AG04450 (cell line): ENCODE measurements at regions of chr4 and their contacts with region 1.

Region 1: DNA sequence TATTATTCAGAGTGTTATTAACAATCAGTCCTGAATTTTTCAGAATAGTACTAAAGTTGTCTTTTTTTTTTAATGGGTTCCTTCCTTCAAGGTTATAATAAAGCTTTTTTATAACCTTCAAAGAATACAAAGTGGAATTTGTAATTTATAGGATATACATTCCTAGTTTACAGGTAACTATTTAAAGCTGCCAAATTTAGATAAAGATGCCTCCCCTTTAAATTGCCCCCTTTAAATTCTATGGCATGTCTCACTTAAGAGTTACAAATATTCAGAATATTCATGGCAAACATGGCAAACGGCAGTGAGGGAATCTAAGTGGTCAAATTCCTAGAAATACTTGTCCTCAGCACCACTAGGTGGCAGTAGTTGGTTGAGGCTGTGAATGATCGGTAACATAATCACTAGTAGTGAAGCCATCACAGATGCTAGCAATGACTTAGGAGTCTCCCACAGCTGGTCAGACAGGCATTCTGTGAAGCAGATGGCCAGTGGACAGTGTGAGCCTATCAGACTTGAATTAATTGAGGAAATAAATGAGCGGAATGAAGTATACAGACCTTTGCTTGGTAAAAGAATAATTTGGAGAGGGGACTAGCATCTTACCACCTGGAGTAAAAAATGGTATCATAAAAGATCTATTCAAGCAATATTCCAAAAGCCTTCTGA is 86.4 kb downstream of the CBR4 start:
- DNase-seq: peak; percentile 76
- H3K4me3 ChIP-seq: no peak overlapping the region
- H3K27ac ChIP-seq: no peak overlapping the region
- H3K27me3 ChIP-seq: no peaks in the 10 kb centered on the region
- CTCF ChIP-seq: peak; percentile 87

Region 2: DNA sequence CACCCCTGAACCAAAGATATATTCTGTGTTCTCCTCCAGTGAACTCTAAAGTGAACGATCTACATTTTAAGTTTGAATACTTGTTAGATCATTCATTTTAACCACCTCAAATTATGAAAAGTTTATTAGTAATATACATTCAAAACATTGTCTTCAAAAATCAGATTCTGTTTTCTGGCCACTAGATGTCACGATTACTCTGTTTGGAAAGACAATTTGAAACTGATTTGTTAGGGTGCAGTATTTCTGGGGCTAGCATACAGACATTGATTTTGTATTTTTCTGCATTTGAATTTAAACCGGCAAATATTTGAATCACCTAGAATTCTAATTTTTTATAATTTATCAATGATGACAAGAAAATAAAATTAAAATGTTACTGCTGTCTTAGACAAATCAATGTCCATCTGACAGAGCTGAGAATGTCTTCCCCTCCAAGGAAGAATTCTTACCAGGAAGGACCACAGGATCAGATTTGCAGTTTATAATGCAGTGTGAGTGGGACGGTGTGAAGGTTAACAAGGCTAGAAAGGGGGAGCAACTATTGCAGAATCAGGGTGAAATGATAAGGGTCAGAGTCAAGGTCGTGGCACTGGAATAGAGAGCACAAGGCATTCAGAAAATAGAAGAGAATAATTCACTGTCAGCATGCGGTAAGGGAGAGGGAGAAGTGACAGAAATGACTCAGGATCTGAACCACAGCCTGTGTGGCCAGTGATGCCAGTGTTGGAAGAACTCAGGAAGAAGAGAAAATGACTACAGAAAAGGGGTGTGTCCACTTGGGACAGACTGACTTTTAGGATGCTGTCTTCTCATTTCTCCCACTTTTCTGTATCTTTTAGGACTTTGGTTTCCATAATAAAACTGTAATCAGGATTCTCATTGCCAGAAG is 739.7 kb before region 1 on chr4:
- CTCF ChIA-PET with region 1: interaction called, 26 read pairs
- POLR2A ChIA-PET with region 1: no interaction called
- DNase-seq: no peak
- H3K4me3 ChIP-seq: no peak overlapping the region
- H3K27ac ChIP-seq: no peak overlapping the region
- H3K27me3 ChIP-seq: no peaks in the 10 kb centered on the region
- CTCF ChIP-seq: peak; percentile 71

Region 3: DNA sequence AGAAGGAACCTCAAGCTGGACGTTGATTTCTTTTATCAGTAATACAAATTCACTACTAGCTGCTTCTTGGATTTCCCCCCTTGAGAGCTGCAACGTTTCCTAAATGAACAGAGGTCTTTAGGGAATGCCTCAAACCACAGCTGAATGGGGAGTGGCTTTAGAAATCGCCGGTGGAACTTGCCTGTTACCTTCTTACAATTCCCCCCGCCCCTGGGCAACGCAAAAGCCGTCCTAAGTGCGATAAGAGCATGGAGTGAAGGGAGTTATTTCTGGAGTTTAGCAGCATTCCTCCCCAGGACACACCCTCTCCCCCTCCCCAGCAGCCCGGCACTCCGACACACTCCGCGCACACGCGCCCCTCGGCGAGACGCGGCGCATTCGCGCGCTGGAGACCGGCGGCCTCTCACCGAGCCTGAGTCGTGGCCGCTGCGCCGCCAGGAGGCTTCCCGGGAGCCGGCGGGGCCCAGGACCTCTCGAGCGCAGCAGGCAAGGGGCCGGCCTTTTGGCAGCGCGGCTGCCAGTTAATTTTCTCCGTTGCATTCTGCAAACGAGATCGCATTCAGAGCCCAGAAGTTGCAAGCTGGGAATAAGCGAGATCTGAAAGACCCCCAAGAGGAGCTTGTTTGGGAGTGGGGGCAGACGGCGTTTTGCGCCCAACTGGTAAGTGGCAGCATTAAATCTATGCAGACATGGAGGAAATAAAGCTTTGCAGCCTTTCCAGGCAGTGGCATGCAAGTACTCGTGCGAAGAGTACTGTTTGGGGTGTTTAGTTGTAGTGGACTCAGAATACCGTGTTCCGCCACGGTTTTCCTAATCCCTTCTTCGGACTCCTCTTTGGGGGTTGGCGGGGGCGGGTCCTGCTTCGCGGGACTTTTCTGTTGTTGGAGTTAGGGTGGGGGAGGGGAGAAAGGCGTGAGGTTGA is 292.2 kb before region 1 on chr4:
- CTCF ChIA-PET with region 1: interaction called, 11 read pairs
- POLR2A ChIA-PET with region 1: no interaction called
- DNase-seq: no peak
- H3K4me3 ChIP-seq: peak overlapping the region; percentile 78
- H3K27ac ChIP-seq: peak overlapping the region; percentile 61
- H3K27me3 ChIP-seq: no peaks in the 10 kb centered on the region
- CTCF ChIP-seq: peak; percentile 54

Region 4: DNA sequence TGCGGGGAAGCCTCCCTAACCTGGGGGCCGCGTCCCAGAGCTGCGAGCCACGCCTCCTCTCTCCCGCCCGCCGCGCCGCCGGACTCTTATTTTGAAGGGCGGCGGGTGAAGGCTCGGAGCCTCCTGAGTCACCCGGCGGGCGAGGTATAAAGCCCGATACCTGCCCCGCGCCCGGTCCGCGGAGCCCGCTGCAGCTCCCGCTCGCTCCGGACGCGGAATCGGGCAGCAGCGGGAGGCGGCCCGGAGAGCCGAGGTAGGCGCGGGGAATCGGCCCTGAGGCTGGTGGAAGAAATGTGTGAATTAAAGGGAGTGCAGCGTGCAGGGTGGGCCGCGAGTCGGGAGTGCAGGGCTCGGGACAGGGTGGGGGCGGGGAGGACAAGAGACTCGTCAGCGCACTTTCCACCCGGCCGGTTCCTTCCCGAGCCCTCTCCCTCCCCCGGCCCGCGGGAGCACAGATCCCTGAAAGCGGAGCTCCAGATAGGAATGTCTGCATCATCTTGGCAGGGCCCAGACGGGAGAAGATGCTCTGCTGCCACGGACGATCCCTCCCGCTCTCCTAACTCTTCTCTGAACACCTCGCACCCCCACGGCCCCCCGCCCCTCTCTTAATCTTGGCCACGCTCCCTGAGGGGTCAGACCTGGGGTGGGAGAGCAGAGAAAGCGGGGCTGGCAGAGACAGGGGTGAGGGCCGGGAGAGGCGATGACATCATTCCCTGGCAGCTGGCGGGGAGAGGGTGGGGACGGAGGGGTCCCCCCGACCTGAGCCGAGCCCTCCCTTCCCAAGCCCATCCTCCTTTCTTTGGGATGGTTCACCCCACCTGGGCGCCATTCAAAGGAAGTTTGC is 91.5 kb before region 1 on chr4:
- CTCF ChIA-PET with region 1: interaction called, 17 read pairs
- POLR2A ChIA-PET with region 1: no interaction called
- DNase-seq: no peak
- H3K4me3 ChIP-seq: peak overlapping the region; percentile 84
- H3K27ac ChIP-seq: peak overlapping the region; percentile 94
- H3K27me3 ChIP-seq: no peaks in the 10 kb centered on the region
- CTCF ChIP-seq: no peak

Region 5: DNA sequence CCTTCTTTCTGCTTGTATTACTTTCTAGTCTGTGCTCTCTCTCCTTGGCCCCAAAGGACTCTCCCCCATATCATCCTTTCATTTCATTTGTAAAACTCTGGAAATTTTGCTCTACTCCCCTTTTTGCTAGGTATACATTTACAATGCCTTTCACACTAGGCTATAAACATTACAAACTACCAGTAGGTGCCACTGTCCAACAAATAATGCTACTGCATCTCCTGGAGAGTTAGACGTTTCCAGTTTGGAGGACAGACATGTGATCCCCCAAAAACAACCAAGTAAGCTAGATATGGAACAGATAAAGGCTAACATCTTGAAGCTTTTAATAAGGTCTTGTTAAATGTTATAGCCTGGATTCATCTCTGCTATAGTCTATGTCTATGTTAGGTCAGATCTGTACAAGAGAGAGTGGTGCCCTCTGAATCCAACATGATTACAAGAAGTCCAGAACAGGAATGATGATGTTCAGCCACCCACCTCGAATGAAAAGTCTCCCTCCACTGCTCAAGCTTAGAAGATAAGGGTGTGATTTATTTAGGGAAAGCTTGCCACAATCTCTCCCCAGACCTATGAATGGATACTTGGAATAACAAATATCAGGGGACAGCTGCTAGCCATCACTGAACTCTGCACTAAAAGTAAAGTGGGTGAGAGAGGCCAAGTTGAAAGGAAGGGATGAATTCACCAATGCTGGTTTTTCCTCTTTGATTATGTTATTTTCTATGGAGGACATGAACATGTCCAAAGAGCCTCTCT is 72.1 kb after region 1 on chr4:
- CTCF ChIA-PET with region 1: interaction called, 14 read pairs
- POLR2A ChIA-PET with region 1: no interaction called
- DNase-seq: no peak
- H3K4me3 ChIP-seq: no peak overlapping the region
- H3K27ac ChIP-seq: no peak overlapping the region
- H3K27me3 ChIP-seq: no peaks in the 10 kb centered on the region
- CTCF ChIP-seq: peak; percentile 54

Region 6: GRCh38 chr4:169492438-169493163 is 568.9 kb after region 1 on chr4:
- CTCF ChIA-PET with region 1: interaction called, 18 read pairs
- POLR2A ChIA-PET with region 1: no interaction called
- DNase-seq: no peak
- H3K4me3 ChIP-seq: no peak overlapping the region
- H3K27ac ChIP-seq: peak overlapping the region; percentile 11
- H3K27me3 ChIP-seq: no peaks in the 10 kb centered on the region
- CTCF ChIP-seq: peak; percentile 87